Mammary epithelial cell (primary cell): ENCODE measurements at regions of chr19 and their contacts with region 1.

Region 1: GRCh38 chr19:1241417-1242095 is at the start of gene ATP5F1D:
- DNase-seq: peak; percentile 91
- H3K4me3 ChIP-seq: peak within 1 kb of the TSS; percentile 74 to 76 (median 74)
- H3K27ac ChIP-seq: peak within 1 kb of the TSS; percentile 27
- H3K4me1 ChIP-seq: peaks cover 45% of the 10 kb centered on the region
- H3K27me3 ChIP-seq: no peaks in the 10 kb centered on the region
- CTCF ChIP-seq: no peak
- total RNA-seq, gene ATP5F1D: 12.3 to 198 TPM

Region 2: DNA sequence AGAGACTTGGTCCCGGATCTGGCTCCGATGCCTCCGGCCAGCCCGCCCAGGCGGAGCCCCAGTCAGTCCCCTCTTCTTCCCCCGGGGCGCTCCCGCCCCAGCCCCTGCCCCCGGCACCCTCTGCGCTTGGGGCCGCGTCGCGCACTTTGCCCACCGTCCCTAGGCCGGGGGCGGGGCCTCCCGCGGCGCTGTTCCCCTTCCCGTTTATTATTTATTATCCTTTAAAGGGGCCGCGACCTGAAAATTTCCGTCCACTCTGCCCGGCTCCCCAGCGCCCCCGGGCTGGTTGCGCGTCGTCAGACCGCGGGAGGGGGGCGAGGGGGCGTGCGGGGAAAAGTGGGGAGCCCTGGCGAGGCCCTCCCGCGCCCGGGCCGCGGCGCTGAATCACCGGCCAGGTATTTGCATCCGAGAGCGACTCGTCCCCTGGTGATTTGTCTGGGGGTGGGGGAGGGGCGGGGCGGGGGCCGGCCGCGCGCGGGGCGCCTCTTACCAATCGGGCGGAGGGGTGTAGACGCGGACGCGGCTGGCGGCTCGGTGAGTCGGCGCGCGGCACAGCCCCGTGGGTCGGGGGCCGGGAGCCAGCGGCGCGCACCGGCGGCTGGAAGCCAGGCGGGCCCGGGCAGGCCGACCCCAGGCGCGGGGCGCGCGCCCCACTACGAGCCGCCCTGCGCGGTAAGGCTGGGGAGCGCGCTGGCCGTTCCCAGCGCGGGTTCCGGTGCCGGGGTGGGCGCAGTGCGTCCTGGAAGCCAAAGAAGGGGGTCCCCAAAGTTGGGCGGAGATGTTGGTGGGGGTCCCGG is 315.8 kb before region 1 on chr19 and contains the start of gene ARID3A:
- CTCF ChIA-PET with region 1: no interaction called
- dilution Hi-C with region 1: no loop called
- in situ Hi-C with region 1: no loop called
- intact Hi-C with region 1: loop called (anchors 1 kb)
- DNase-seq: peak; percentile 82
- H3K4me3 ChIP-seq: peak within 1 kb of the TSS; percentile 72 to 98 (median 82)
- H3K27ac ChIP-seq: peak within 1 kb of the TSS; percentile 45
- H3K4me1 ChIP-seq: peaks cover 7% of the 10 kb centered on the region
- H3K27me3 ChIP-seq: no peaks in the 10 kb centered on the region
- CTCF ChIP-seq: no peak
- total RNA-seq, gene ARID3A: 8.2 to 17.4 TPM

Region 3: DNA sequence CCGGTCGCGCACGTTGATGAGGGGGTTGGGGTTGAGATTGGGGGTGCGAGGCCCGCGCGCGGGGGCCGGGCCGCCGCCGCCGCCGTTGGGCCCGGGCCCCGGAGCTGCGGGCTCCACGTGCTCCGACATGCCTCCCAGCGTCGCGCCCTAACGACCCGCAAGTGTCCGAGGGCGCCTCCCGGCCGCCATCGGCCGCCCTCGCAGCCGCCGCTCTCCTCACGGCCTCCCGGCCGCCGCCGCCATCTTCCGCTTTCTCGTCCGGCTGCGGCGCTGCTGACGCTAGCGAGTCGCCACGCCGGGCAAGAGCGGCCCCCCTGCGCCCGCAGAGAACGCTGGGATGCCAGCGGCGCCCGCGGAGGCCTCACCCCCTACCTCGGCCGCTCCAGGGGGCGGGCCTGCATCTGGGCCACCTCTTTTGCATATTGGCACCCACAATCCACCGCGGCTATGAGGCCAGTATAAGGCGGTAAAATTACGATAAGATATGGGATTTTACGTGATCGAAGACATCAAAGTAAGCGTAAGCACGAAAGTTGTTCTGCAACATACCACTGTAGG is 220.6 kb before region 1 on chr19 and contains the start of gene TMEM259:
- CTCF ChIA-PET with region 1: no interaction called
- dilution Hi-C with region 1: no loop called
- in situ Hi-C with region 1: no loop called
- intact Hi-C with region 1: loop called (anchors 1 kb)
- DNase-seq: peak; percentile 95
- H3K4me3 ChIP-seq: peak within 1 kb of the TSS; percentile 72 to 94 (median 92)
- H3K27ac ChIP-seq: peak within 1 kb of the TSS; percentile 95
- H3K4me1 ChIP-seq: peaks cover 41% of the 10 kb centered on the region
- H3K27me3 ChIP-seq: no peaks in the 10 kb centered on the region
- CTCF ChIP-seq: no peak
- total RNA-seq, gene TMEM259: 104 to 152 TPM

Region 4: DNA sequence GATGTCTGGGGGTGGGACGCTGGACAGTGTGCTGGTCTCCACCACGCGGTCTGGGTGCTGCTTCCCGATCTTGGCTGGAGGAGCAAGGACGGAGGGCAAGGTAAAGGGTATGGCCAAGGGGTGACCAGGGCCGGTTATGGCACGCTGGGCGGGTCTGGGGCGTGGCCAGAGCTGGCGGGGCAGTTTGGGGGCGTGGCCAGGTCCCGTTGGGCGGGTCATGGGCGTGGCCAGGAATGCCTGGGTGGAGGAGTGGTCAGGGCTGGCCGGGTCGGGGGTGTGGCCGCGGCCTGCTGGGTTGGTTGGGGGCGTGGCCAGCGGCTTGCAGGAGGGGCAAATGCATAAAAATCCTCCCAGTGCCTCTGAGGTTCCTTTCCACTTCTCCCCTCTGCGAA is 118.6 kb before region 1 on chr19:
- CTCF ChIA-PET with region 1: no interaction called
- dilution Hi-C with region 1: loop called (anchors 10 kb)
- in situ Hi-C with region 1: no loop called
- intact Hi-C with region 1: no loop called
- DNase-seq: peak; percentile 69
- H3K4me3 ChIP-seq: no peak overlapping the region
- H3K27ac ChIP-seq: no peak overlapping the region
- H3K4me1 ChIP-seq: peaks cover 14% of the 10 kb centered on the region
- H3K27me3 ChIP-seq: no peaks in the 10 kb centered on the region
- CTCF ChIP-seq: no peak

Region 5: GRCh38 chr19:1227655-1228054 is 13.9 kb before region 1 on chr19:
- CTCF ChIA-PET with region 1: no interaction called
- dilution Hi-C with region 1: no loop called
- in situ Hi-C with region 1: no loop called
- intact Hi-C with region 1: no loop called
- DNase-seq: no peak
- H3K4me3 ChIP-seq: no peak overlapping the region
- H3K27ac ChIP-seq: no peak overlapping the region
- H3K4me1 ChIP-seq: peaks cover 5% of the 10 kb centered on the region
- H3K27me3 ChIP-seq: no peaks in the 10 kb centered on the region
- CTCF ChIP-seq: no peak

Region 6: DNA sequence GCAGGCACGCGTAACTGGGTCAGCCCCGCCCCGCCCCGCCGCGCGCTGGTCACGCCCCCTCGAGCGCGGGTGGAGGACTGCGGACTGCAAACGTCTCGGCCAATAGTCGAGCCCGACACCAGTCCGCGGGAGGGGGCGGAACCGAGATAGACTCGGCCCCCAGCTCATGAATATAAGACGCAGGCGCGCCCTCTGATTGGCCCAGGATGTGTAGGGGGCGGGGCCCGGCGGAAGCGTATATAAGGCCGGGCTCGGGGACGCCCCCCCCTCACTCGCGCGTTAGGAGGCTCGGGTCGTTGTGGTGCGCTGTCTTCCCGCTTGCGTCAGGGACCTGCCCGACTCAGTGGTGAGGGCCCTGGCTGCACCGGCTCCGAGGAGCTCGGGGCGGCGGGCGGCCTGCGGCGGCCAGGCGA is 27.5 kb after region 1 on chr19 and contains the start of gene CIRBP:
- CTCF ChIA-PET with region 1: interaction called, 126 read pairs
- dilution Hi-C with region 1: no loop called
- in situ Hi-C with region 1: no loop called
- intact Hi-C with region 1: loop called (anchors 1 kb)
- DNase-seq: peak; percentile 98
- H3K4me3 ChIP-seq: peak within 1 kb of the TSS; percentile 55 to 72 (median 61)
- H3K27ac ChIP-seq: peak within 1 kb of the TSS; percentile 77
- H3K4me1 ChIP-seq: peaks cover 54% of the 10 kb centered on the region
- H3K27me3 ChIP-seq: no peaks in the 10 kb centered on the region
- CTCF ChIP-seq: no peak
- total RNA-seq, gene CIRBP: 196 to 221 TPM